ENCODE measurements at regions of chr20 and their contacts with region 1.

Region 1: DNA sequence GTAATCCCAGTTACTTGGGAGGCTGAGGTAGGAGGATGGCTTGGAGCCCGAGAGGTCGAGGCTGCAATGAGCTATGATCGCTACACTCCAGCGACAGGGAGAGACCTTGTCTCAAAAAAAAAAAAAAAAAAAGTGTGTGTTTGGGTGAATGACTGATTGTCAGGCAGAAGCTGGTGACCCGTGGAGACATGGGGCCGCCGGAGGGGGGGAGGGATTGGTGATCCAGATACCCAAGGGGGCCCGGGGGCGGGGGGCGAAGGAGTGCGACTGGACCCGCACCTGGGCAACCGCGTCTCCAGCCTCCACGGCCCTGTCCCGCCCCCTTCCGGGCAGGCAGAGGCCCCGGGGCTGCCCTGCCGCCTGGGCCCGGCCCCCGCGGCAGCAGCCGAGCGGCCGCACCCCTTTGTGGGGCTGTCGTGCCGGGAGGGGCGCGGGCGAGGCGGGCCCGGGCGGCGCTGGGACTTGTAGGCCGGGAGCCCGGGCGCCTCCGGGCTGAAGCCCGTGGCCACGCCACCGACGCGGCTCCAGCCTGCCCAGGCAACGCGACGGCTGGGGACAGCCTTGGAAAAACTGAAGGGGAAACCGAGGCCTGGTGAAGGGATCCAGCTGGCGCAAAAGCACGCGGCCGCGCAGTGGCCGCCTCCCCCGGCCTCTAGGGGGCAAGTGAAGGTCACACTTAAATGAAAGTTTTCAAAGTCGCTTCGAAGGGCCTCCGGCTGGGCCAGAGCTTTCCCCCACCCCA is 2.1 kb upstream of the RBM38 start:
- DNase-seq: peak; percentile 84 to 95 (median 93)
- ATAC-seq: peak; percentile 85 to 87
- H3K4me3 ChIP-seq: peak overlapping the region; percentile 26
- H3K27ac ChIP-seq: peak overlapping the region; percentile 75
- H3K4me1 ChIP-seq: peaks cover 6% of the 10 kb centered on the region
- H3K27me3 ChIP-seq: no peaks in the 10 kb centered on the region

Region 2: DNA sequence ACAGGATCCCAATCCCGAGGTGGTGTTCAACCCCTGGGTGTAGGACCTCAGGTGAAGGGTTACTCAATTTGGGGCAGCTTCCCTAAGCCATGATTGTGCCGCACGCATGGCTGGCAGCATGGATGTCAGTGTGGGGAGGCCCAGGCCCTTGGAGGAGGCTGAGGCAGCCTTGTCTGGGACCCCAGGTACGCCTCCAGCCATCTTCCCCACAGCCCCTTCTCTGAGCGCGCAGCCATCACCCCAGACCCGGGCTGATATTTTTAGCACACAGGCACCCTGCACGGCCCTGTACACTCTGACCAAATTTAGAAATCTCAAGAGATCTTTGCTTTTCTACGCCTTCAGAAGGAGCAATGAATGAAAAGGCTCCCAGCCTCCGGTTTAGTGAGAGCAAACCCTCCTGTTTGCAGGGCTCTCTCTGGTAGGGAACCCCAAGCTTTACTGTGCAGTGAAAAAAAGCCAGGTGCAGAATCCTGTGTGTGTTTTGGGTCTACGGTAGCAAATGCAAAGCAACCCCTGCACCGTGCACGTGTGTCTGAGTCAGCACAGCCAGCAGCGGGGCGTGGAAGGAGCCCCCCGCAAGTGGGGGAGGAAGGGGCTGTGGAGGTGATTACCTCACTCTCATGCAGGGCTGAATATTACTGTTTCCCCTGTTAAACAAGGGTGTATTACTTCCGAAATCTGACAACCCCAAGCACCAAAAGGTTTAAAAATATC is 91.5 kb after region 1 on chr20:
- intact Hi-C with region 1: loop called in 1 of 4 experiments (anchors 5 kb)
- DNase-seq: no peak
- ATAC-seq: peak; percentile 30 to 53
- H3K4me3 ChIP-seq: no peak overlapping the region
- H3K27ac ChIP-seq: no peak overlapping the region
- H3K4me1 ChIP-seq: no peaks in the 10 kb centered on the region
- H3K27me3 ChIP-seq: no peaks in the 10 kb centered on the region